ENCODE measurements at regions of chr5 and their contacts with region 1.

Region 1: GRCh38 chr5:68252673-68253623 is 37.4 kb downstream of the PIK3R1 start:
- DNase-seq: peak; percentile 67
- CTCF ChIP-seq: peak; percentile 80

Region 2: GRCh38 chr5:66987949-66988838 is 1264.8 kb before region 1 on chr5:
- in situ Hi-C with region 1: loop called (anchors 25 kb)
- DNase-seq: peak; percentile 19
- CTCF ChIP-seq: peak; percentile 55

Region 3: GRCh38 chr5:67246108-67246507 is 1006.8 kb before region 1 on chr5:
- in situ Hi-C with region 1: loop called (anchors 10 kb)
- DNase-seq: peak; percentile 30
- CTCF ChIP-seq: peak; percentile 58

Region 4: DNA sequence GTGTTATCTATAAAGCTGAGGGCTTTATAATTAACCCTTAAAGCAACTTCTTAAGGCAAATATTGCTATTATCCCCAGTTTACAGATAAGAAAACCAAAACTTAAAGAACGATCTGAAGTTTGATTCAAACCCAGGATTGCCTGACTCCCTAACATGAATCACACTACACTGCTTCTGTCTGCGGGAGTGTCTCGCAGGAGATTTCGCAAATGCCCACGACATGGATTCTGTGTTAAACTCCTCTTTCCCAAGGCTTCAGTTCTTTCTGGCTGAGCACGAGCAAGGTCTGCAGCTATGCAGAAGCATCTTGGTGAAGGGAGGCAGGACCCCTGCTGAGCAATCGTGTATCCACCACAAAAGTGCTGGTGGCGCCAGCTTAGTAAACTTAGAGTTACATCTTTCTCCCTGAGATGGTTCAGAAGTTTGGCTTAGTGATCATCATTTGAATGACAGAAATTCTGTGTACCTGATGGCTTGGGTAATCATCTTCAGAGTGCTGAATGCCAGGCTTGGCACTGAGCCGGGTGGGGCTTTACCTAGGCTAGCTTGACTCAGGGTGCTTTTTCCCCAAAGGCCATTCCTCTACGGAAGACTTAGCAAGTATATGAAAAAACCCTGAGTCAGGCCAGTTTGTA is 118.8 kb before region 1 on chr5:
- in situ Hi-C with region 1: no loop called
- DNase-seq: no peak
- CTCF ChIP-seq: no peak

Region 5: GRCh38 chr5:68685863-68686262 is 432.9 kb after region 1 on chr5:
- in situ Hi-C with region 1: no loop called
- DNase-seq: no peak
- CTCF ChIP-seq: no peak

Region 6: GRCh38 chr5:69007726-69008368 is 754.9 kb after region 1 on chr5:
- in situ Hi-C with region 1: loop called (anchors 25 kb)
- DNase-seq: peak; percentile 66
- CTCF ChIP-seq: peak; percentile 97